Dendritic cell treated with granulocyte-macrophage colony-stimulating factor and Interleukin-4, amounts not matched to agents 40 ng/mL and 50 ng/mL, for 4 days (primary cell): ENCODE measurements at regions of chr22 and their contacts with region 1.

Region 1: GRCh38 chr22:25777870-25778269 is 35.9 kb downstream of the MYO18B start:
- H3K4me3 Mint-ChIP-seq: no peak overlapping the region
- H3K27ac Mint-ChIP-seq: no peak overlapping the region
- H3K4me1 Mint-ChIP-seq: peaks cover 8% of the 10 kb centered on the region
- H3K27me3 Mint-ChIP-seq: peaks cover 39% of the 10 kb centered on the region

Region 2: DNA sequence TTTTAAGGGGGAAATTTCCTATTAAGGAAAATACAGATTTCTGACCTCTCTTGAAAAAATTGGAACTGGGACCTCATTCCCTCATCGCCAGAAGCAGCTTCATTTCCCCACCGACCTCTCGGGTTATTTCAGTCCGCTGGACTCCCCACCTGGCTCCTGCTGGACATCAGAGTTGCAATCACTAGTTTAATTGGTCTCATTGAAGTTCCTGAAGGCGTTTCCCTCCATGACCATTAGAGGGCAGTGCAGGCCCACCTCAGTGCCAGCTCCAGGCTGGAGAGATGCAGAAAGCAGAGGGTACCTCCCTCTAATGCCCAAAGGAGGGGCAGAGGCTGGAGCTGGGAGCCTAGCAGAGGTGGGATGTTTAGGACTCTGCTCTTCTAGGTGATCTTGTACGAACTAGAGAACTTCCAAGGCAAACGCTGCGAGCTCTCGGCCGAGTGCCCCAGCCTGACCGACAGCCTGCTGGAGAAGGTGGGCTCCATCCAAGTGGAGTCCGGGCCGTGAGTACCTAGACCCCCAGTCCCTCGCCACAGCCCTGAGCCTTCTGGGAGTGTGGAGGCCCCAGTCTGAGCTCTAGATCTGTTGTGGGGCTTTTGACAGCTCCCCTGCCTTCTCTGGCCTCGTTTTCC is 575.5 kb before region 1 on chr22:
- intact Hi-C with region 1: loop called (anchors 5 kb)
- H3K4me3 Mint-ChIP-seq: no peak overlapping the region
- H3K27ac Mint-ChIP-seq: no peak overlapping the region
- H3K4me1 Mint-ChIP-seq: no peaks in the 10 kb centered on the region
- H3K27me3 Mint-ChIP-seq: no peaks in the 10 kb centered on the region

Region 3: DNA sequence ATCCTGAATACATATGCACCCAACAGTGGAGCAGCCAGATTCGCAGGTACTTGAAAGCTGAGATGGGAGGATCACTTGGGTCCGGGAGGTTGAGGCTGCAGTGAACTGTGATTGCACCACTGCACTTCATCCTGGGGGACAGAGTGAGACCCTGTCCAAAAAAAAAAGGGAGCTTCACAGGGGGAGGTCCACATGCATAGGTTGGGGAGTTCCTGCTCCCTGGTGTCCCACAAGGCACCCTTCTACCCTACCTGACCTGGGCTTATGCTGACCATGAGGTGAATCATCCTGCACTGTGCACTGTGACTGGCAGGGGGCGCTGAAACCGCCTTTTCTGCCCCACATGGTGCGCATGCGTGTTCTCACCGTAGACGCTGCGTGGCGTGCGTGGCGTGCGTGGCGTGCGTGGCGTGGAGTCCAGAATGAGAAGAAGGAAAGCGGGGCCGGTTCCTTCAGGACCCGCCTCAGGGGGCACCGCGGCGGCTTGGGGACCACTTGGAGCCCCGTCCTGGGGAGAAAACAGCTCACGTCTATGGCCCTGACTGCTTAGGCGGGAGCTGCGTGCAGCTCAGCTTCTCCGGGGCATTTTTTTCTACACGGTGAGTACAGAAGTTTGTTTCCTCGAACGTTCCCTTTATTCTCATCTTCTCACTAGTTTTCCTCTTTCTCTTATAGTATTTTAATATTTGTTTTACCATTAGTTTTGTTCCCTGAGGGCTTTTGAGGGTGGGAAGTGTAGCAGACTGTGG is 330.0 kb before region 1 on chr22:
- intact Hi-C with region 1: loop called (anchors 5 kb)
- H3K4me3 Mint-ChIP-seq: peak overlapping the region; percentile 91
- H3K27ac Mint-ChIP-seq: peak overlapping the region; percentile 83
- H3K4me1 Mint-ChIP-seq: peaks cover 37% of the 10 kb centered on the region
- H3K27me3 Mint-ChIP-seq: no peaks in the 10 kb centered on the region

Region 4: GRCh38 chr22:25465949-25466348 is 311.9 kb before region 1 on chr22:
- intact Hi-C with region 1: loop called (anchors 1 kb)
- H3K4me3 Mint-ChIP-seq: no peak overlapping the region
- H3K27ac Mint-ChIP-seq: peak overlapping the region; percentile 60
- H3K4me1 Mint-ChIP-seq: peaks cover 17% of the 10 kb centered on the region
- H3K27me3 Mint-ChIP-seq: no peaks in the 10 kb centered on the region

Region 5: GRCh38 chr22:25546751-25547150 is 231.1 kb before region 1 on chr22:
- intact Hi-C with region 1: loop called (anchors 10 kb)
- H3K4me3 Mint-ChIP-seq: no peak overlapping the region
- H3K27ac Mint-ChIP-seq: peak overlapping the region; percentile 74
- H3K4me1 Mint-ChIP-seq: peaks cover 62% of the 10 kb centered on the region
- H3K27me3 Mint-ChIP-seq: peaks cover 2% of the 10 kb centered on the region

Region 6: GRCh38 chr22:26330966-26331625 is 553.2 kb after region 1 on chr22:
- intact Hi-C with region 1: loop called (anchors 2 kb)
- H3K4me3 Mint-ChIP-seq: no peak overlapping the region
- H3K27ac Mint-ChIP-seq: no peak overlapping the region
- H3K4me1 Mint-ChIP-seq: no peaks in the 10 kb centered on the region
- H3K27me3 Mint-ChIP-seq: peaks cover 11% of the 10 kb centered on the region